Sigmoid colon (tissue), 7 donors: ENCODE measurements at regions of chr20 and their contacts with region 1.

Region 1: GRCh38 chr20:18632196-18633009 is 44.5 kb downstream of the DTD1 start:
- DNase-seq: peak; percentile 84
- H3K4me3 ChIP-seq: no peak overlapping the region
- H3K27ac ChIP-seq: no peak overlapping the region
- H3K4me1 ChIP-seq: peaks cover 0 to 43% (median 4%) of the 10 kb centered on the region in 4 donors
- H3K27me3 ChIP-seq: no peaks in the 10 kb centered on the region
- CTCF ChIP-seq: peak; percentile 57 to 93 (median 76)
- EP300 ChIP-seq: no peak
- POLR2A ChIP-seq: no peak

Region 2: GRCh38 chr20:18496740-18497592 is 135.4 kb before region 1 on chr20 and contains the start of gene RBBP9:
- intact Hi-C with region 1: no loop called
- DNase-seq: peak; percentile 92
- H3K4me3 ChIP-seq: peak within 1 kb of the TSS; percentile 70 to 76 (median 73)
- H3K27ac ChIP-seq: peak within 1 kb of the TSS; percentile 66 to 77 (median 74)
- H3K4me1 ChIP-seq: peaks cover 0 to 15% (median 14%) of the 10 kb centered on the region in 4 donors
- H3K27me3 ChIP-seq: no peaks in the 10 kb centered on the region
- CTCF ChIP-seq: no peak
- EP300 ChIP-seq: no peak
- POLR2A ChIP-seq: peak in 1 of 2 donors; percentile 15
- total RNA-seq, gene RBBP9: 11.1 to 23.5 (median 13.9) TPM

Region 3: GRCh38 chr20:18793625-18794427 is 161.4 kb after region 1 on chr20:
- intact Hi-C with region 1: loop called (anchors 10 kb)
- DNase-seq: peak; percentile 94
- H3K4me3 ChIP-seq: peak overlapping the region; percentile 60 to 79 (median 66)
- H3K27ac ChIP-seq: peak overlapping the region; percentile 86 to 89 (median 88)
- H3K4me1 ChIP-seq: peaks cover 0 to 15% (median 9%) of the 10 kb centered on the region in 4 donors
- H3K27me3 ChIP-seq: no peaks in the 10 kb centered on the region
- CTCF ChIP-seq: no peak
- EP300 ChIP-seq: peak in 1 of 4 donors; percentile 14
- POLR2A ChIP-seq: peak; percentile 58 to 65

Region 4: GRCh38 chr20:18822832-18823231 is 190.4 kb after region 1 on chr20:
- intact Hi-C with region 1: loop called (anchors 2 kb)
- DNase-seq: peak; percentile 81
- H3K4me3 ChIP-seq: no peak overlapping the region
- H3K27ac ChIP-seq: peak overlapping the region in 2 of 4 donors; percentile 41 to 53
- H3K4me1 ChIP-seq: no peaks in the 10 kb centered on the region
- H3K27me3 ChIP-seq: no peaks in the 10 kb centered on the region
- CTCF ChIP-seq: no peak
- EP300 ChIP-seq: no peak
- POLR2A ChIP-seq: no peak

Region 5: DNA sequence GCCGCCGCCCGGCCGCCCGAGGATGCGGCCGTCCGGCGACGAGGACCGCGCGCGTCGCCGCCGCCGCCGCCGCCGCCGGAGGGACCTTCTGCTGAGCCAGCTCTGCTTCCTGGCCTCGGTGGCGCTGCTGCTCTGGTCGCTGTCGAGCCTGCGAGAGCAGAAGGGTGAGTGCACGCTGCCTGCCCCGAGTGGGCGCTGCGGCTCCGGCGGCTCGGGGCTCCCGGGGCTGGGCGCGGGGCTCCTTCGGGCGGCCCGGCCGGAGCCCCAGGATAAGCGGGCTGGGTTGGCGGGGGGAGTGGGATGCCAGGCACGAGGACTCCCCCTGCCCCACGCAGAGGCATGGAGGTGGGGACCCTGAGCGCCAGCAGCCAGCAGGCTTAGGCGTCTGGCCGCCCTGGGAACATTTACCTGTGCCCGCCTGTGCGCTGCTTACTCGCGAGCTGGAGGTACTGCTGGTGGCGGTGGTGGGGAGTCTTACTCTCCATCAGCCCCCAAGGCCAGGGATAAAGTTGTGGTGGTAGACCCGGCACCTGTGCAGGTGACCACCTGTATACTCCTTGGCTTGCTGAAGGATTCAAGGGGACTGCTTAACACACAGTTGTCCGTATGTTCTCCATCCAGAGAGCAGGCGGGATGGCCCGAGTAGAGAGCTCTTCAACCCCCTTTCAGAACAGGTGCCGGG is 580.6 kb after region 1 on chr20:
- intact Hi-C with region 1: loop called (anchors 10 kb)
- DNase-seq: peak; percentile 93
- H3K4me3 ChIP-seq: peak overlapping the region; percentile 47 to 74 (median 60)
- H3K27ac ChIP-seq: peak overlapping the region; percentile 49 to 84 (median 80)
- H3K4me1 ChIP-seq: peaks cover 0 to 41% (median 31%) of the 10 kb centered on the region in 4 donors
- H3K27me3 ChIP-seq: peaks cover 0 to 6% (median 0%) of the 10 kb centered on the region in 3 donors
- CTCF ChIP-seq: peak; percentile 42 to 69 (median 52)
- EP300 ChIP-seq: no peak
- POLR2A ChIP-seq: no peak

Region 6: GRCh38 chr20:19583532-19584175 is 951.3 kb after region 1 on chr20:
- intact Hi-C with region 1: loop called (anchors 5 kb)
- DNase-seq: peak; percentile 80
- H3K4me3 ChIP-seq: no peak overlapping the region
- H3K27ac ChIP-seq: no peak overlapping the region
- H3K4me1 ChIP-seq: peaks cover 0 to 7% (median 6%) of the 10 kb centered on the region in 4 donors
- H3K27me3 ChIP-seq: no peaks in the 10 kb centered on the region
- CTCF ChIP-seq: peak; percentile 61 to 86 (median 83)
- EP300 ChIP-seq: no peak
- POLR2A ChIP-seq: no peak

Region 7: GRCh38 chr20:19661717-19662636 is 1029.6 kb after region 1 on chr20:
- intact Hi-C with region 1: loop called (anchors 5 kb)
- DNase-seq: peak; percentile 80
- H3K4me3 ChIP-seq: no peak overlapping the region
- H3K27ac ChIP-seq: peak overlapping the region in 1 of 4 donors; percentile 42
- H3K4me1 ChIP-seq: peaks cover 0 to 9% (median 5%) of the 10 kb centered on the region in 4 donors
- H3K27me3 ChIP-seq: no peaks in the 10 kb centered on the region
- CTCF ChIP-seq: peak; percentile 92 to 98 (median 96)
- EP300 ChIP-seq: no peak
- POLR2A ChIP-seq: no peak